Caco-2 (cell line): ENCODE measurements at regions of chr22 and their contacts with region 1.

Region 1: DNA sequence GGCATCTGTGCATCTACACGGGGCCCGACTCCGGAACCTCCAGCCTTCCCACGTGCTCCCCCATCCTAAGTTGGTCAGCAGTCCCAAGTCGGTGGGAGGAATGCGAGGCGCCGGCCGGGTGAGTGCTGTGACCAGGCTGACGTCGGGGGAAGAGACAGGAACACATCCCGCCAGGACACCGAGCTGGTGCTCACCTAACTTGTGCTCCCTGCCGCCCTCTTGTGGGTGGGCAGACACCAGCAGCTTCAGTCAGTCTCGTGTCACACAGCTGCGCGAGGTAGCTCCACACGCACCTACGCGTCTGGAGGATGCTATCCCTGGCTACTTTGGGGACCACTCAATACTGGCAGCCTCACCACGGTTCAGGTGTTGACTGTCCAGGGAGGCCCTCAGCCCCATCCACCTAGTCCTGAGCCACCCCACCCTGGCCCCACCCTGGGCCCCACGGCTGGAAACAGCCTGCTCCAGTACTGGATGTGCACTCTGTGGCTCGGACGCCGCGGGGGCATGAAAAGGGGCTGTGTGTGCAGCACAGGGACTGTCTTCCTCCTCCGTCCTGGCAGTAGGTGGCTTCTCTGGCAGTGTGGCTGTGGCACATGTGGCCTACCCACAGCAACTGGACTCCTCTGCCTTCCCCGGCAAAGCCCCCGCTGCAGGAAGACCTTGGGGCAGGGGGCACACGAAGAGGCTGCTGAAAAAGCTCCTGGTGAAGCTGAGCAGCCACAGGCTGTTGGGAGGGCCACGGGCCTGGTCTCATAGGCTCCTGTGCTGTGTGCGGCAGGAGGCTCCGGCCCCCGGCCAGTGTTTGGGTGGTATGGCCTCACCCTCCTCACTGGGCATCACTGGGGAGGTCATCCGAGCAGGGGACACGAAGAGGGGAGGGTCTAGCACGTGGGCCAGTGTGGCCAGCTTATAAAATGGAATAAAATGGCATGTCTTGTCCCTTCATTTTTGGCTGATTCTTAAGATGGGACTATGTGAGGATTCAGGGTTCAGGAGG is 11.2 kb upstream of the BID start:
- DNase-seq: peak; percentile 70 to 78
- H3K4me3 ChIP-seq: no peak overlapping the region
- H3K4me3 Mint-ChIP-seq: no peak overlapping the region
- H3K27ac Mint-ChIP-seq: no peak overlapping the region
- H3K4me1 ChIP-seq: peaks cover 10% of the 10 kb centered on the region
- H3K4me1 Mint-ChIP-seq: no peaks in the 10 kb centered on the region
- H3K27me3 ChIP-seq: no peaks in the 10 kb centered on the region
- H3K27me3 Mint-ChIP-seq: no peaks in the 10 kb centered on the region
- CTCF ChIP-seq: peak; percentile 60

Region 2: DNA sequence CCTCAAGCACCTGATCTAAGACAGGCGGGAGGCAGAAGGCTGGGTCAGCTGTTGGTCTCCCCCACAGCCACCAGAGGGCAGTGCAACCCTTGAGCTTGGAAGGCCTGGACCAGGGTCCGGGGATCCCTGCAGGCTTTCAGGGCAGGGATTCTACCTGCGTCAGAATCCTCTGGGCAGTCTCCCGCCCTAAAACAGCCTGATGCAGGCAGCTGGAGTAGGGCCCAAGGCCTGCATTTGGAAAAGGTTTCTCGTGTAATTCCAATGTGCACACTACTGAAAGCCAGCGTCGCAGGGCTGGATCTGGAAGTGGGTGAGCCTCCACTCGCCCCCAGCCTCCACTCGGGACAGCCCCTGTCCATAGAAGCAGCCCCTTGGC is 43.0 kb before region 1 on chr22:
- CTCF ChIA-PET with region 1: interaction called, 59 read pairs
- POLR2A ChIA-PET with region 1: no interaction called
- intact Hi-C with region 1: loop called (anchors 1 kb)
- DNase-seq: peak; percentile 80 to 85
- H3K4me3 ChIP-seq: no peak overlapping the region
- H3K4me3 Mint-ChIP-seq: no peak overlapping the region
- H3K27ac Mint-ChIP-seq: no peak overlapping the region
- H3K4me1 ChIP-seq: no peaks in the 10 kb centered on the region
- H3K4me1 Mint-ChIP-seq: no peaks in the 10 kb centered on the region
- H3K27me3 ChIP-seq: no peaks in the 10 kb centered on the region
- H3K27me3 Mint-ChIP-seq: no peaks in the 10 kb centered on the region
- CTCF ChIP-seq: peak; percentile 82 to 94

Region 3: GRCh38 chr22:17773606-17774205 is 11.8 kb before region 1 on chr22:
- CTCF ChIA-PET with region 1: interaction called, 10 read pairs
- POLR2A ChIA-PET with region 1: no interaction called
- intact Hi-C with region 1: no loop called
- DNase-seq: peak; percentile 65 to 67
- H3K4me3 ChIP-seq: peak overlapping the region; percentile 60
- H3K4me3 Mint-ChIP-seq: peak overlapping the region; percentile 75
- H3K27ac Mint-ChIP-seq: no peak overlapping the region
- H3K4me1 ChIP-seq: peaks cover 9% of the 10 kb centered on the region; the same call in 1 of the 2 replicates
- H3K4me1 Mint-ChIP-seq: peaks cover 6% of the 10 kb centered on the region
- H3K27me3 ChIP-seq: no peaks in the 10 kb centered on the region
- H3K27me3 Mint-ChIP-seq: no peaks in the 10 kb centered on the region
- CTCF ChIP-seq: no peak